ENCODE measurements at regions of chr16 and their contacts with region 1.

Region 1: DNA sequence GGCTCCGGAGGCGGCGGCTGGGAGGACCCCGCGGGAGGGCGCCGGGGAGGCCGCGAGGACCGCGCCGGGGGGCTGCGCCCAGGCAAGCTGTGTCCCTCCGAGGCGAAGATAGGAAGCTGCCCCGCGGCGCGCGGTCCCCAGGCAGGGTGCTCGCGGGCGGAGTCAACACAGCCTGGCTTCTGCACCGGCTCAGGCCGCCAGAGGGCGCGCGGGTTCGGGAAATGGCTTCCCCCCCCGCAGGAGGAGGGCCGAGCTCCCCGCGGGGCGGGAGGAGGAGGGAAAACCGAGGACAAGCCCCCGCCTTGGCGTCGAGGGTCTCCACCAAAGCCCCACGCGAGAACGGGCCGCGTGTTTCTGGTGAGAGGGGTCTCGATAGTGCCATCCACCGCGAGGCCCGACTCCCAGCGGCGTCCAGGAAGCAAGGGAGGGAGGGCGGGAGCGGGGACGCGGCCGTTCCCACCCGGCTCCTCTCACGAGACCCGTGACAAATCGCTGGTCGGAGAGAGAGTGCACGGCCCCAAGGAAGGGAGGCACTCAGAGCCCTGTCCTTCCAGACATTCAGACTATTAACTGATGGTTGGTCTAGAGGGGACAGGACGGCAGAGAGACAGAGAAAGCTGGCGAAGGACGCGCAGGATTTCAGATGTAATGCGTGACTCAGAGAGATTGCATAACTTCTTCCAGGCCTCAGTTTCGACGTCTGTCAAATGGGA is 64.4 kb upstream of the DNAJA2 start:
- H3K4me3 Mint-ChIP-seq: peak overlapping the region; percentile 82
- H3K27ac Mint-ChIP-seq: peak overlapping the region; percentile 82
- H3K4me1 Mint-ChIP-seq: no peaks in the 10 kb centered on the region
- H3K27me3 Mint-ChIP-seq: peaks cover 13% of the 10 kb centered on the region

Region 2: DNA sequence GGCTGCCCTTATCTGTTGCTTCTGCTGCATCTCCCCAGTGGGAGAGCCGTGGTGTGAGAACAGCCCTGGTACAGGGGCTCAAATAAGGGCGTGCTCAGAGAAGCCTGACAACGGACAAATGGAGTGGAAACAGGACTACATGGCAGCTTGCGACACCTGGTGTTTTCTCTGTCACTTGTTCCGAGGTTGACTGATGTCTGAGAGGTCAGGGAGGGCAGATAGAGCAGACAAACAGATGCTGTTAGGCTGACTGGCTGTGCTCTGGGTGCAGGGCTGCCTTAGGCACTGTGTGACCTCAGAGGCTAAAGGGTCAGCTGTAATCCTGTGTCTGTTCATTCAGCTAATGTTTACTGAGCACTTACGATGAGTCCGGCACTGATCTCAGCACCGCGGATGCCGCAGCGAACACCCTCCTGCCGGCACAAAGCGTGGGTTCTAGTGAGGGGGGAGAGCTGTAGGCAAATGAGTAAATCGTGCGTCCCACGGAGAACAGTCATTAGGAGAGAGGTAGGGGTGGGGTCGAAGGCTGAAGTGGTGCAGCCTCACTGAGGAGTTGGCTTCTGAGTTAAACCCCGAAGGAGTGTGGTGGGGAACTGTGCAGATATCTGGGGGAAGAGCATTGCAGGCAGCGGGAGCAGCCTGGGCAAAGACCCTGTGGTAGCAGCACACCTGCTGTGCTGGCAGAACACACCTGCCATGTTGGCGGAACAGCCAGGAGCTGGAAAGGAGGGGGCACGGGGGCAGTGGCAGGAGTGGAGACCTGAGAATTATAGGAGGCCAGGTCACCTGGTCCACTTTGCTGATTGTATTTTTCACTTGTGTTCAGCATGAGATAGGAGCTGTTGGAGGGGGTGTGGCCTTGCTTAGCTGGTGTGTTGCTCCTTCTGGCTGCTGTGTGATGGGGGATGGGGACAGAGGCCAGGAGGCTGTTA is 118.8 kb before region 1 on chr16:
- intact Hi-C with region 1: no loop called
- H3K4me3 Mint-ChIP-seq: no peak overlapping the region
- H3K27ac Mint-ChIP-seq: peak overlapping the region; percentile 21
- H3K4me1 Mint-ChIP-seq: peaks cover 31% of the 10 kb centered on the region
- H3K27me3 Mint-ChIP-seq: no peaks in the 10 kb centered on the region

Region 3: GRCh38 chr16:46973207-46973995 is 64.5 kb before region 1 on chr16 and contains the start of gene DNAJA2:
- intact Hi-C with region 1: loop called (anchors 5 kb)
- H3K4me3 Mint-ChIP-seq: peak within 1 kb of the TSS; percentile 93
- H3K27ac Mint-ChIP-seq: peak within 1 kb of the TSS; percentile 95
- H3K4me1 Mint-ChIP-seq: peaks cover 31% of the 10 kb centered on the region
- H3K27me3 Mint-ChIP-seq: no peaks in the 10 kb centered on the region

Region 4: DNA sequence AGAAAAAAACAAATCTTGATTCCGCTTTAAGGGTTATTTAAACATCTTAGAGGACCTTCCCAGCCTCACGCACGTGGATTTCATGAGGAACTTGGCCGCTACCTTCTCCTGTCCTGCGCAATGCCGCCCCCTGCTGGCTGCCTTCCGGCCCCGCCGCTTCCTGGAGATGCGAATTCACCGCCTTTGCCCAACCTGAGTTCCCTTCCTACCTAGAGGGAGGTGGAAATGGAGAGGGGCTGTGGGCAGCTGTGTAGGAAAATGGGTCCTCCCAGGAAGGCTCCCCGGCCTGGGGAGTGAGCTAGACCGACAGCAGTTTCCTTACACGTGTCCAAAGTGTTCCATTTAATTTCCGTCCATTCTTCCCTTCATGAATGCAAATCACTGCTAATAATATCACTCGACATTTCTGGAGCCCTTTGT is 1118.9 kb after region 1 on chr16:
- intact Hi-C with region 1: loop called (anchors 2 kb)
- H3K4me3 Mint-ChIP-seq: no peak overlapping the region
- H3K27ac Mint-ChIP-seq: no peak overlapping the region
- H3K4me1 Mint-ChIP-seq: peaks cover 5% of the 10 kb centered on the region
- H3K27me3 Mint-ChIP-seq: peaks cover 35% of the 10 kb centered on the region

Measured in dendritic cell treated with granulocyte-macrophage colony-stimulating factor and Interleukin-4, amounts not matched to agents 40 ng/mL and 50 ng/mL, for 4 days (primary cell).